ENCODE measurements at regions of chr19 and their contacts with region 1.

Region 1: GRCh38 chr19:16382775-16383543 is 58.3 kb downstream of the KLF2 start:
- DNase-seq: peak; percentile 86
- ATAC-seq: peak; percentile 68
- H3K4me3 ChIP-seq: peak overlapping the region in 4 of 5 experiments; percentile 2 to 33 (median 17)
- H3K4me3 Mint-ChIP-seq: peak overlapping the region; percentile 81
- H3K27ac ChIP-seq: peak overlapping the region; percentile 93 to 95
- H3K27ac Mint-ChIP-seq: peak overlapping the region; percentile 99
- H3K4me1 ChIP-seq: peaks cover 63 to 89% of the 10 kb centered on the region in 2 donors
- H3K4me1 Mint-ChIP-seq: peaks cover 81% of the 10 kb centered on the region
- H3K27me3 ChIP-seq: no peaks in the 10 kb centered on the region
- H3K27me3 Mint-ChIP-seq: no peaks in the 10 kb centered on the region
- CTCF ChIP-seq: peak; percentile 78

Region 2: GRCh38 chr19:16143399-16144245 is 239.3 kb before region 1 on chr19 and contains the start of gene HSH2D:
- CTCF ChIA-PET with region 1: interaction called, 3 read pairs
- POLR2A ChIA-PET with region 1: no interaction called
- intact Hi-C with region 1: loop called (anchors 5 kb)
- DNase-seq: peak; percentile 95
- ATAC-seq: peak; percentile 71
- H3K4me3 ChIP-seq: peak within 1 kb of the TSS; percentile 73 to 94 (median 91)
- H3K4me3 Mint-ChIP-seq: peak within 1 kb of the TSS; percentile 95
- H3K27ac ChIP-seq: peak within 1 kb of the TSS; percentile 95 to 97
- H3K27ac Mint-ChIP-seq: peak within 1 kb of the TSS; percentile 100
- H3K4me1 ChIP-seq: peaks cover 71 to 93% of the 10 kb centered on the region in 2 donors
- H3K4me1 Mint-ChIP-seq: peaks cover 78% of the 10 kb centered on the region
- H3K27me3 ChIP-seq: no peaks in the 10 kb centered on the region
- H3K27me3 Mint-ChIP-seq: no peaks in the 10 kb centered on the region
- CTCF ChIP-seq: no peak
- total RNA-seq, gene HSH2D: 254 and 259 TPM in 2 replicates

Region 3: GRCh38 chr19:16259385-16260159 is 123.4 kb before region 1 on chr19:
- CTCF ChIA-PET with region 1: interaction called, 25 read pairs
- POLR2A ChIA-PET with region 1: interaction called, 4 read pairs
- intact Hi-C with region 1: no loop called
- DNase-seq: peak; percentile 94
- ATAC-seq: peak; percentile 79
- H3K4me3 ChIP-seq: peak overlapping the region in 1 of 5 experiments; percentile 42
- H3K4me3 Mint-ChIP-seq: peak overlapping the region; percentile 78
- H3K27ac ChIP-seq: peak overlapping the region; percentile 87 to 89
- H3K27ac Mint-ChIP-seq: peak overlapping the region; percentile 95
- H3K4me1 ChIP-seq: peaks cover 75 to 94% of the 10 kb centered on the region in 2 donors
- H3K4me1 Mint-ChIP-seq: peaks cover 83% of the 10 kb centered on the region
- H3K27me3 ChIP-seq: no peaks in the 10 kb centered on the region
- H3K27me3 Mint-ChIP-seq: no peaks in the 10 kb centered on the region
- CTCF ChIP-seq: no peak

Region 4: GRCh38 chr19:16330368-16330801 is 52.6 kb before region 1 on chr19:
- CTCF ChIA-PET with region 1: interaction called, 100 read pairs
- POLR2A ChIA-PET with region 1: interaction called, 87 read pairs
- intact Hi-C with region 1: loop called (anchors 1 kb)
- DNase-seq: peak; percentile 95
- ATAC-seq: peak; percentile 63
- H3K4me3 ChIP-seq: peak overlapping the region in 1 of 5 experiments; percentile 20
- H3K4me3 Mint-ChIP-seq: peak overlapping the region; percentile 70
- H3K27ac ChIP-seq: peak overlapping the region; percentile 23 to 35
- H3K27ac Mint-ChIP-seq: peak overlapping the region; percentile 98
- H3K4me1 ChIP-seq: peaks cover 24 to 40% of the 10 kb centered on the region in 2 donors
- H3K4me1 Mint-ChIP-seq: peaks cover 51% of the 10 kb centered on the region
- H3K27me3 ChIP-seq: no peaks in the 10 kb centered on the region
- H3K27me3 Mint-ChIP-seq: no peaks in the 10 kb centered on the region
- CTCF ChIP-seq: no peak

Region 5: DNA sequence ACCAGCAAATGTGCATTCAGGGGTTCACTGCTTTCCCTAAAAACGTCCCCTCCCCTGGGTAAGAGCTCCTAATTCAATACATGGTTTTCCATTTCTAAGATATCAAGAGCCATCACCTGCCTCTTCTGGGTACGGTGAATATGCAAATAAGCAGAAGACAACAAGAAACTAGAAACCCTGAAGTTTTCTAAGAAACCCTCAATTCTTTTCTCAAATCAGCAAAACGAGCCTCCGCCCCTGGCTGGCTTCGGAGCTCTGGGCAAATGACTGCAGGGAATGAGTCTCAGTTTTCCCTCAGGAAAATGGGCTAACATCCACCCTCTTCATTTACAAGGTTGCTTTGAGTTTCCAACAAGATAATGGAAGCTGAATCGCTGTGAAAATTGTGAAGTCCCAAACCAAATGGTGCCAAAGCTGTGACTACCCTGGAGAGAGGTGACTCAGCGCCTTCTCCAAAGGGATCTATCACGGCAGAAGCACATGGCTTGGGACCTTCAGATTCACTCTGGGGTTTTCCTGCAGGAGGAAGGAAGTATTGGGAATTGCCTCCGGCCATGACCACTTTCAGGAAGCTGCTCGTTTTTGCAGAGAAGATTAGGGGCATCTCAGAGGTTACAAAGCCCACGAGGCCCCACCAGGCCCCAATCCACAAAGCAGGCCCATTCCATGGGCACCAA is 31.7 kb before region 1 on chr19:
- CTCF ChIA-PET with region 1: interaction called, 5 read pairs
- POLR2A ChIA-PET with region 1: interaction called, 12 read pairs
- intact Hi-C with region 1: no loop called
- DNase-seq: peak; percentile 40
- ATAC-seq: no peak
- H3K4me3 ChIP-seq: peak overlapping the region in 2 of 5 experiments; percentile 0 to 11
- H3K4me3 Mint-ChIP-seq: peak overlapping the region; percentile 55
- H3K27ac ChIP-seq: peak overlapping the region in 1 of 2 donors; percentile 36
- H3K27ac Mint-ChIP-seq: peak overlapping the region; percentile 53
- H3K4me1 ChIP-seq: peaks cover 24 to 33% of the 10 kb centered on the region in 2 donors
- H3K4me1 Mint-ChIP-seq: peaks cover 37% of the 10 kb centered on the region
- H3K27me3 ChIP-seq: no peaks in the 10 kb centered on the region
- H3K27me3 Mint-ChIP-seq: no peaks in the 10 kb centered on the region
- CTCF ChIP-seq: no peak

Region 6: GRCh38 chr19:16371540-16371986 is 11.4 kb before region 1 on chr19:
- CTCF ChIA-PET with region 1: interaction called, 87 read pairs
- POLR2A ChIA-PET with region 1: interaction called, 64 read pairs
- intact Hi-C with region 1: loop called (anchors 1 kb)
- DNase-seq: peak; percentile 93
- ATAC-seq: peak; percentile 73
- H3K4me3 ChIP-seq: peak overlapping the region; percentile 15 to 47 (median 19)
- H3K4me3 Mint-ChIP-seq: no peak overlapping the region
- H3K27ac ChIP-seq: peak overlapping the region; percentile 85 to 94
- H3K27ac Mint-ChIP-seq: no peak overlapping the region
- H3K4me1 ChIP-seq: peaks cover 94 to 100% of the 10 kb centered on the region in 2 donors
- H3K4me1 Mint-ChIP-seq: peaks cover 38% of the 10 kb centered on the region
- H3K27me3 ChIP-seq: no peaks in the 10 kb centered on the region
- H3K27me3 Mint-ChIP-seq: no peaks in the 10 kb centered on the region
- CTCF ChIP-seq: peak; percentile 27

Region 7: DNA sequence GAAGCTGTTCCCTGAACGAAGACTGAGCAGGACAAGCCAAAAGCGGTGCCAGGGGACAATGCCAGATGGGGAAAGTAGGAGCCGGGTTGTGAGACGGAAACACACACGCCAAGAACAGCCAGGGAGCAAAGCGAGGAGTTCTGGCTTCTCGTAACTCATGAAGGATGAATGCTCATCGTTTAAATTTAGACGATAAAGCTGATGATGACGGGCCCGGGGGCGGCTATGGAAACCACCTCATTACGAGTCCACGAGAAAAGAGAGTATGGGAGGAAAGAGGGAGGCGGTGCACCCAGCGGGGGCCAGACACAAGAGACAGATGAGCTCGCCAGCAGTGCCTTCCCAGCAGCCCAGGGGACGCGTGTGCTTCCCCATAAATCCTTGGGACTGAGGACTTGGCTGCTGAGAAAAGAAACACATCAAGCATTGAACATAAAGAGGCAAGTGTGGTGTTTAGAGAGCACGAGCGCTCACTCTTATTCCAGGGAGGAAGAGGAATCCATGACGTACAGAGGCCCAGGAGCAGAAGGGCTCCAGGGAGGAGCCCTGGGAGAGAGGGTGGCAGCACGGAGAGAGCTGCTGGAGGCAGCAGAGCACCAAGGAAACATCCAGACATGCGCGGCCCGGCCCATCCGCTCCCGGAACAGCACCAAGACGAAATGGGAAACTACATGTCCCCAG is 18.1 kb after region 1 on chr19:
- CTCF ChIA-PET with region 1: interaction called, 34 read pairs
- POLR2A ChIA-PET with region 1: interaction called, 13 read pairs
- intact Hi-C with region 1: loop called (anchors 1 kb)
- DNase-seq: no peak
- ATAC-seq: no peak
- H3K4me3 ChIP-seq: no peak overlapping the region
- H3K4me3 Mint-ChIP-seq: no peak overlapping the region
- H3K27ac ChIP-seq: peak overlapping the region in 1 of 2 donors; percentile 27
- H3K27ac Mint-ChIP-seq: peak overlapping the region; percentile 64
- H3K4me1 ChIP-seq: peaks cover 44 to 58% of the 10 kb centered on the region in 2 donors
- H3K4me1 Mint-ChIP-seq: peaks cover 56% of the 10 kb centered on the region
- H3K27me3 ChIP-seq: no peaks in the 10 kb centered on the region
- H3K27me3 Mint-ChIP-seq: no peaks in the 10 kb centered on the region
- CTCF ChIP-seq: no peak

Measured in B cell (primary cell).